Ascending aorta (tissue), 2 donors: ENCODE measurements at regions of chr11 and their contacts with region 1.

Region 1: DNA sequence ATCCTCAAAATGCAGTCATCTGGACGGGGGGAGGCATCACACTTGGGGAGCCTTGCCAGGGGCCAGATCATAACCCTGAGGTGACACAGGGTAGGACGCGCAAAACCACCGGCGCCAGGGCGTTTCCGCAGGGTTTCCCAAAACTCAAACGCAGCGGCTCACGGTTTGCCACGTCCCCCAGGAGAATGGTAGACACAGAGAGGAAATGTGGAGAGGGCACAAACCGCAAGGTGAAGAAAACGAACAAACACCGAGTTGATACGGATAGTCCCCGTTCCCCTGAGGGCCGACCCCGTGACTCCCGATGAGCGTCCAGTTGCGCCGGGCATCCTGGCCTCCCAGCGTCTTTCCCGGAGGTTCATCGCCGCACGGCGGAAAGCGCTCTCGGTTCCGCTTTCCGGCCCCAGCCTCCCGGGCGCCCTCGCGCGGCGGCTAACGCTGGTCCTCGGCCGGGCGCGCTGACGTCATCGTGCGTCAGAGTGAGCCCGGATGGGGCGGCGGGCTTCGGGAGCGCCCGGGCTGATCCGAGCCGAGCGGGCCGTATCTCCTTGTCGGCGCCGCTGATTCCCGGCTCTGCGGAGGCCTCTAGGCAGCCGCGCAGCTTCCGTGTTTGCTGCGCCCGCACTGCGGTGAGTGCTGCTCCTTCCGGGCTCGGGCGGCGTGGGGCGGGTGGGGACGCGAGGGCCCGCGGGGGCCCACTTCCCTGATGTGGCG is at the start of gene BIRC2:
- DNase-seq: peak; percentile 66 to 97
- H3K4me3 ChIP-seq: peak within 1 kb of the TSS; percentile 78 to 81
- H3K27ac ChIP-seq: peak within 1 kb of the TSS; percentile 98
- H3K4me1 ChIP-seq: peaks cover 2 to 3% of the 10 kb centered on the region in 2 donors
- H3K27me3 ChIP-seq: no peaks in the 10 kb centered on the region
- CTCF ChIP-seq: peak; percentile 86 to 87 (median 86)
- total RNA-seq, gene BIRC2: 27.7 TPM

Region 2: DNA sequence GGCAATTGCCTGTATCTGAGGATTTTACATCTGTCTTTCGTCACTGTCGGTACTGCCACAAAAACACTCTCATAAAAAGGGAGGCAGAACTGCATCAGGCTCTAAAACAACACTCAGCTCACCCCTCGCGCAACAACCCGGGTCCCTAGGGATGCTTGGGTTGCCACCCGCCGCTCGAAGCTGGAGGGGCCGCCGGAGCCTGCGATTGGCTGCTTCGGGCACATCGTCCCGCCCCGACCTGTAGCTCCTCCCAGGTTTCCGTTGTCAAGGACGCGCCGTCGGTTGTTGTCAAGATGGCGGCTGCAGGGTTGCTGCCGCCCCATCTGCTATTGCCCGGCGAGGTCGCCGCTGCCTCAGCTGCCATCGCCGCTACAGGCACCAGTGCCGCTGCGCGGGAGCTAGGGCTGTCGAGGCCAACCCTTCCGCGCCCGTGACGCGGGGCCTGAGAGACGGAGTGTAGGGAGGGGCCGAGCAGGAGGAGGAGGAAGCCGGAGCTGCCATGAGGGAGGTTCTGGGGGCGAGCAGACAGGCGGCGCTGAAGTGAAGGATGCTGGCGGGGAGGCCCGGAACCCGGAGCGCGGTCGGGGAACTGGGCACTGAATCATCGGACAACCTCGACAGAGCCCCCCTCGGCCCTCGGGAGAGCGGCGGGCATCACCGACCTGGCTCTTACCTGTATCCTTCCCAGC is 432.0 kb before region 1 on chr11 and contains the start of gene CEP126:
- intact Hi-C with region 1: loop called (anchors 10 kb)
- DNase-seq: peak; percentile 77 to 98
- H3K4me3 ChIP-seq: peak within 1 kb of the TSS; percentile 46 to 74
- H3K27ac ChIP-seq: peak within 1 kb of the TSS; percentile 86 to 97
- H3K4me1 ChIP-seq: peaks cover 6 to 9% of the 10 kb centered on the region in 2 donors
- H3K27me3 ChIP-seq: no peaks in the 10 kb centered on the region
- CTCF ChIP-seq: peak; percentile 40 to 59 (median 42)
- total RNA-seq, gene CEP126: 7.2 TPM

Region 3: DNA sequence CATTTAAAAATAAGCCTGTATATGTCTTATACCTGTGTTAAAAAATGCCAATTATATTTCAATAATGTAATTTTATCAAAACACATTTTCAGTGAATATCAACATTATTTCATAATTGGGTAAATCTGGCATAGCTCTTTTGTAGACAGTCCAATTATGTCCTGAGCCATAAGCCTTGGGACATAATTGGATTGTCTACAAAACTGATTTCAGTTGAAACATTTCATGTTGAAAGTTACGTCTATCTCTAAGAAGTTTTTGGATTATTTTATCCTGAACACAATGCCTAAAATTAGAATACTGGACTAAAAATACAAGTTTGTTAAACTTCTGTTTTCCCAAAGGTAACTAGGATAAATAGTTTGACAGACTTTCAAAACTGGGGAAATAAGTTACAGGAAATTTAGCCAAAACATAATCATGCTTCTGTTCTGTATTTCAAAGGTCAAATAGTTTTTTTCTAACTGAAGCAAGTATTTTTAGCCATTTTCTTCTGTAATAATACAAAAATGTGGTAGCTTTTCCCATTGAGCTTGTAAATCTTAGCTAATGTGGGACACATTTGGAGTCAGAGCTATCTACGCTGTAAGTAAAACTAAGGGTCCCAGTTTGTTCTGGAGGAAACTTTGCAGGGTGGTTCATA is 130.4 kb before region 1 on chr11:
- intact Hi-C with region 1: loop called (anchors 2 kb)
- DNase-seq: no peak
- H3K4me3 ChIP-seq: no peak overlapping the region
- H3K27ac ChIP-seq: peak overlapping the region; percentile 89 to 91
- H3K4me1 ChIP-seq: peaks cover 6 to 47% of the 10 kb centered on the region in 2 donors
- H3K27me3 ChIP-seq: no peaks in the 10 kb centered on the region
- CTCF ChIP-seq: no peak

Region 4: DNA sequence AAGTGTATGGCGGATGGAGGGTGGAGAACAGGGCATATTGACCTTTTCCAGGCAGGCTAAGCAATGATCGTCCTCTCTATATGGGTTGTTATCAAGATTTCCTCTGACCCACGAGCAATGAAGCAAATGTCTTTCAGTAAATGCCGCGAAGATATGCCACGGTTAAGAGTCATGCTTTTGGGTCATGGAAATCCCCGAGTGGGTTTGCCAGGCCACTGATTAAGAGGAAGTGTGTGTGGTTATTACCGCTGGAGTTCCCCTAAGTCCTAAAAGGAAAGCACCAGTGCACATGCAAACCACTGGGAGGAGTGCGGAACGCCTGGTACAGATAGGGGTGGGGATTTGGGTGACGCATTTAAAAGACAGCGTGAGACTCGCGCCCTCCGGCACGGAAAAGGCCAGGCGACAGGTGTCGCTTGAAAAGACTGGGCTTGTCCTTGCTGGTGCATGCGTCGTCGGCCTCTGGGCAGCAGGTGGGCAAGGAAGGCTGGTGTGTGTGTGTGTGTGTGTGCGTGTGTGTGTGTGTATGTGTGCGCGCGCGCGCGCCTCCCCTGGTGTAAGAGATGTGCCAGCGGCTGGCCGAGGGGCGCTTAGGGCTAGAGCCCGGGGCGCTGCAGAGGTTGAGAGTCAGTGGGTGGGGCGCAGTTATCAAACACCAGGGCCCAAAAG is 29.7 kb before region 1 on chr11 and contains the start of gene BIRC3:
- intact Hi-C with region 1: loop called (anchors 2 kb)
- DNase-seq: peak; percentile 80 to 94
- H3K4me3 ChIP-seq: peak within 1 kb of the TSS; percentile 54 to 76
- H3K27ac ChIP-seq: peak within 1 kb of the TSS; percentile 61 to 68
- H3K4me1 ChIP-seq: peaks cover 0 to 5% of the 10 kb centered on the region in 2 donors
- H3K27me3 ChIP-seq: no peaks in the 10 kb centered on the region
- CTCF ChIP-seq: peak; percentile 34 to 36 (median 34)
- total RNA-seq, gene BIRC3: 2.8 TPM

Region 5: GRCh38 chr11:102495161-102496042 is 148.5 kb after region 1 on chr11:
- intact Hi-C with region 1: loop called (anchors 2 kb)
- DNase-seq: no peak
- H3K4me3 ChIP-seq: no peak overlapping the region
- H3K27ac ChIP-seq: no peak overlapping the region
- H3K4me1 ChIP-seq: no peaks in the 10 kb centered on the region
- H3K27me3 ChIP-seq: no peaks in the 10 kb centered on the region
- CTCF ChIP-seq: peak; percentile 38 to 66 (median 54)